Activated T-helper 1 cell treated with anti-CD3 and anti-CD28 coated beads, Interleukin-12 subunit alpha, Interleukin-12 subunit beta, Interleukin-2, Interleukin-4 antibody, amounts not matched to agents 30 ng/mL and 10 ng/mL and 1 ng/mL, durations not matched to agents 14 hours and 24 hours and 36 hours (primary cell): ENCODE measurements at regions of chr2 and their contacts with region 1.

Region 1: GRCh38 chr2:219498280-219499057 is at the start of gene GMPPA:
- DNase-seq: peak; percentile 94
- H3K4me3 Mint-ChIP-seq: peak within 1 kb of the TSS; percentile 93
- H3K27ac Mint-ChIP-seq: peak within 1 kb of the TSS; percentile 91
- H3K4me1 Mint-ChIP-seq: peaks cover 36% of the 10 kb centered on the region
- H3K27me3 Mint-ChIP-seq: peaks cover 35% of the 10 kb centered on the region
- total RNA-seq, gene GMPPA: 41.3 and 50.3 TPM in 2 replicates

Region 2: DNA sequence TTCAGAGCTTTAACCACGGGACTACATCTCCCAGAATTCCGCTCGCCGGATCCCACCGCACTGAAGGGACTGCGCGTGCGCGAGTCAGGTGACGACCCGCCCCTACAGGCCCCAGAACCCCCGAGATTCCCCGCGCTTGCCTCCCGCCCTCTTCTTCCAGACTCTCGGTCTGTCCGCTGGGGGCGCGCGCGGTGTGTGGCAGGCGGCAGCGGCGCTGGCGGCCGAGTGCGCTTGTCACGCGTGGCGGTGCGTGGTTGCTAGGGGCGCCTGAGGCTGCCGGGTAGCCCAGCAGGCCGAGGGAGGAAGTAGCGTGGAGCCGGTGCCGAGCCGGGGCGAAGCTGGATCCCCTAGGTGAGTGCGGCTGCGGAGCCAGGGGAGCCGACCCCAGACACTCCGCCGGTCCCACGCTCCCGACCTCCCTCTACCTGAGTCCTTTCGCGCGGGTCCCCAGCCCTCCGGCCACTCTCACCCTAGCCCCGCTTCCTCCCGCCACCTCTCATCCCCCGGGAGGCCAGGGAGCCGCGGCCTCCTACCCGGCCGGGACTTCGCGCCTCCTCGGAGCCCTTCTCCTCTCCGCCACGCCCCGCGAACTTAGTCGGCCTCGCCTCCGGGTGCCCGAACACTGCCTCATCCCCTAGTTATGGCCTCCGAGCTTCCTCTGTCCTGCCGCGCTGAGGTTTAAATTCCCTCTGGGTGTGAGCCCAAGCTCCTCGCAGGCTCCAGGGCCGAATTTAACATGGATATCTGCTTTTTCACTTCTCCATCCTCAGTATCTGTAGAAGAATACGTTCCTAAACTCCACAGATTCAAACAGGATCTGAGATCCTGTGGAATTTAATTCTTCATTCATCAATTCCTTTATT is 787.6 kb before region 1 on chr2 and contains the start of gene TTLL4:
- intact Hi-C with region 1: loop called (anchors 1 kb)
- DNase-seq: peak; percentile 99
- H3K4me3 Mint-ChIP-seq: peak within 1 kb of the TSS; percentile 94
- H3K27ac Mint-ChIP-seq: peak within 1 kb of the TSS; percentile 87
- H3K4me1 Mint-ChIP-seq: peaks cover 27% of the 10 kb centered on the region
- H3K27me3 Mint-ChIP-seq: peaks cover 12% of the 10 kb centered on the region
- total RNA-seq, gene TTLL4: 70.6 and 78.3 TPM in 2 replicates

Region 3: GRCh38 chr2:219206442-219207253 is 291.8 kb before region 1 on chr2 and contains the start of gene ZFAND2B:
- intact Hi-C with region 1: loop called (anchors 2 kb)
- DNase-seq: peak; percentile 96
- H3K4me3 Mint-ChIP-seq: peak within 1 kb of the TSS; percentile 92
- H3K27ac Mint-ChIP-seq: peak within 1 kb of the TSS; percentile 99
- H3K4me1 Mint-ChIP-seq: peaks cover 40% of the 10 kb centered on the region
- H3K27me3 Mint-ChIP-seq: no peaks in the 10 kb centered on the region
- total RNA-seq, gene ZFAND2B: 35.0 and 41.3 TPM in 2 replicates

Region 4: GRCh38 chr2:219278655-219279516 is 219.6 kb before region 1 on chr2 and contains the start of gene DNAJB2:
- intact Hi-C with region 1: loop called (anchors 1 kb)
- DNase-seq: peak; percentile 99
- H3K4me3 Mint-ChIP-seq: peak within 1 kb of the TSS; percentile 94
- H3K27ac Mint-ChIP-seq: peak within 1 kb of the TSS; percentile 99
- H3K4me1 Mint-ChIP-seq: peaks cover 45% of the 10 kb centered on the region
- H3K27me3 Mint-ChIP-seq: peaks cover under 1% of the 10 kb centered on the region
- total RNA-seq, gene DNAJB2: 40.8 and 45.3 TPM in 2 replicates

Region 5: DNA sequence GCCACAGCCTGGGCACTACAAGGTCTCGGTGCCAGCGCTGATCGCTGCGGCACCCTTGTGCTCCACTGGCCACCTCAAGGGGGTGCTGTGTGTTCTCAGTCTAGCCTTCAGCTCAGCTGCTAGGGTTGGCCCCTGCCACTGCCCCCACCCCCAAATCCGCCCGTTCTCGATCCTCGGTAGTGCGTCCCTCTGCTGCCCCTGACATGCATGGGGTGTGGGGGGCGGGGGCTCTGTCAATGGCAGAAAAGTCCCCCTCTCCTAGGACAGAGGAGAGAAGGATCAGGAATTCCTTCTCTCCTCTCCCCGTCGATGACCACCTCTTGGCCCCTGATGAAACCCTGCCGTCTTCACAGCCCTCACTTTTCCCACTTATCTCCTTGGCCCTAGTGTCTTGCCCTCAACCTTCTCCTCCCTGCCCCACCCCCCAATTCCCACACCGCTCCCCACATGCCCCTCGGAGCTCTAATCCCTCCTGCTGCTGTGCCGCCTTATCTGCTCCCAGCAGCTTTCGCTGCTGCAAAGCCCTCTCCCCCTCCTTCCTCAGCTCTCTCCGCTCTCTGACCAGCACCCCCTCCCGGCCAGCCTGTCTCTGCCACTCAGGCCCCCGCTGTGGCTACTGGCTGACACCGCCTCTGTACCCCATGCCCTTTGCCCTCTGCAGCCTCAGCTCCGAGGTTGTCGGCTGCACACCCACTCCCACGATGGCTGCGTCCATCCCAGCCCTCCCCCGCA is 11.5 kb after region 1 on chr2:
- intact Hi-C with region 1: loop called (anchors 1 kb)
- DNase-seq: peak; percentile 12
- H3K4me3 Mint-ChIP-seq: no peak overlapping the region
- H3K27ac Mint-ChIP-seq: no peak overlapping the region
- H3K4me1 Mint-ChIP-seq: peaks cover 10% of the 10 kb centered on the region
- H3K27me3 Mint-ChIP-seq: peaks cover 43% of the 10 kb centered on the region

Region 6: GRCh38 chr2:219552382-219553167 is 54.1 kb after region 1 on chr2:
- intact Hi-C with region 1: loop called (anchors 1 kb)
- DNase-seq: peak; percentile 80
- H3K4me3 Mint-ChIP-seq: peak overlapping the region; percentile 84
- H3K27ac Mint-ChIP-seq: no peak overlapping the region
- H3K4me1 Mint-ChIP-seq: no peaks in the 10 kb centered on the region
- H3K27me3 Mint-ChIP-seq: peaks cover 27% of the 10 kb centered on the region